ENCODE measurements at regions of chr3 and their contacts with region 1.

Region 1: GRCh38 chr3:72818092-72818773 is 30.0 kb downstream of the SHQ1 start:
- DNase-seq: no peak
- H3K4me3 Mint-ChIP-seq: no peak overlapping the region
- H3K27ac Mint-ChIP-seq: no peak overlapping the region
- H3K4me1 Mint-ChIP-seq: peaks cover 36% of the 10 kb centered on the region
- H3K27me3 Mint-ChIP-seq: no peaks in the 10 kb centered on the region

Region 2: GRCh38 chr3:71710906-71711494 is 1107.2 kb before region 1 on chr3:
- intact Hi-C with region 1: loop called (anchors 1 kb)
- DNase-seq: no peak
- H3K4me3 Mint-ChIP-seq: no peak overlapping the region
- H3K27ac Mint-ChIP-seq: no peak overlapping the region
- H3K4me1 Mint-ChIP-seq: peaks cover 56% of the 10 kb centered on the region
- H3K27me3 Mint-ChIP-seq: no peaks in the 10 kb centered on the region

Region 3: GRCh38 chr3:71955240-71956068 is 862.8 kb before region 1 on chr3:
- intact Hi-C with region 1: loop called (anchors 10 kb)
- DNase-seq: no peak
- H3K4me3 Mint-ChIP-seq: no peak overlapping the region
- H3K27ac Mint-ChIP-seq: no peak overlapping the region
- H3K4me1 Mint-ChIP-seq: peaks cover 33% of the 10 kb centered on the region
- H3K27me3 Mint-ChIP-seq: no peaks in the 10 kb centered on the region

Region 4: DNA sequence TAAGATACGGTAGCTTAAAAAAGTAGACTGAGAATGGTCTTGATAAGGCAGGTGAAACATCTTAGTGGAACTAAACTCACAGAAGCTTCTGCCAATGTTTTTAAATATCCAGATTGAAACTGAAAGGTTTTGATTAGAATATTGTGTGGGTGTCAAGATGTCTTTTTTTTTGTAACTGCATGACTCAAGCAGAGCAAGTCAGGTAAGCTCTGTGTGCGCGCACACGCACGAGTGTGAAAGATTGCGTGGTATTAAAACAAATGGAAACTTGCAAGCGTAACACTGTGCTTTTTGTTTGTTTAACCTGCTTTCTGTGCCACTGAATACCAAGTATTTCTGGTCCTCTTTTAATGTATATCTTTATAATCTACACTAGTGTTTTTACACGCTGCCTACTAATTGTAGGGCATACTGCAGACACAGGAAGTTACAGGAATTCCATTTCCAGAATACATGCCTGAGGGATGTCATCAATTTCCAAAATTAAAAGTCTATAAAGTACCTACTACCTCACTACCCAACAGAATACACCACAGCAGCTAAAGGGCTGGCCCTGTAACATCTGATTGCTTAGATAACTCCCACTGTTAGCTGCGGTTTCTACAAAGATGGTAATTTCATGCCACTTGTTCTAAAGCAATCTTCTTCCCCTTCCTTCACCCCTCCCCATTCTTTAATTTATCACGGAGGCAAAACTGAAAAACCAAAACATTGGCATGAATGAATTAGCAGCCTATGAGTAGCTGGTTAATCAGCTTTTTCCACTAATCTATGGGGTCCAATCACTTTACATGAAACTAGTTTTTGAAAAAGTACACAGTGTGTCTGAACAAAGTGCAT is 442.8 kb before region 1 on chr3:
- intact Hi-C with region 1: loop called (anchors 2 kb)
- DNase-seq: no peak
- H3K4me3 Mint-ChIP-seq: peak overlapping the region; percentile 32
- H3K27ac Mint-ChIP-seq: peak overlapping the region; percentile 92
- H3K4me1 Mint-ChIP-seq: peaks cover 48% of the 10 kb centered on the region
- H3K27me3 Mint-ChIP-seq: no peaks in the 10 kb centered on the region

Region 5: GRCh38 chr3:72482589-72483321 is 335.5 kb before region 1 on chr3:
- intact Hi-C with region 1: loop called (anchors 2 kb)
- DNase-seq: peak; percentile 47
- H3K4me3 Mint-ChIP-seq: peak overlapping the region; percentile 68
- H3K27ac Mint-ChIP-seq: peak overlapping the region; percentile 94
- H3K4me1 Mint-ChIP-seq: peaks cover 73% of the 10 kb centered on the region
- H3K27me3 Mint-ChIP-seq: no peaks in the 10 kb centered on the region

Region 6: GRCh38 chr3:72722930-72723726 is 95.1 kb before region 1 on chr3:
- intact Hi-C with region 1: loop called (anchors 1 kb)
- DNase-seq: no peak
- H3K4me3 Mint-ChIP-seq: no peak overlapping the region
- H3K27ac Mint-ChIP-seq: no peak overlapping the region
- H3K4me1 Mint-ChIP-seq: peaks cover 19% of the 10 kb centered on the region
- H3K27me3 Mint-ChIP-seq: no peaks in the 10 kb centered on the region

Region 7: DNA sequence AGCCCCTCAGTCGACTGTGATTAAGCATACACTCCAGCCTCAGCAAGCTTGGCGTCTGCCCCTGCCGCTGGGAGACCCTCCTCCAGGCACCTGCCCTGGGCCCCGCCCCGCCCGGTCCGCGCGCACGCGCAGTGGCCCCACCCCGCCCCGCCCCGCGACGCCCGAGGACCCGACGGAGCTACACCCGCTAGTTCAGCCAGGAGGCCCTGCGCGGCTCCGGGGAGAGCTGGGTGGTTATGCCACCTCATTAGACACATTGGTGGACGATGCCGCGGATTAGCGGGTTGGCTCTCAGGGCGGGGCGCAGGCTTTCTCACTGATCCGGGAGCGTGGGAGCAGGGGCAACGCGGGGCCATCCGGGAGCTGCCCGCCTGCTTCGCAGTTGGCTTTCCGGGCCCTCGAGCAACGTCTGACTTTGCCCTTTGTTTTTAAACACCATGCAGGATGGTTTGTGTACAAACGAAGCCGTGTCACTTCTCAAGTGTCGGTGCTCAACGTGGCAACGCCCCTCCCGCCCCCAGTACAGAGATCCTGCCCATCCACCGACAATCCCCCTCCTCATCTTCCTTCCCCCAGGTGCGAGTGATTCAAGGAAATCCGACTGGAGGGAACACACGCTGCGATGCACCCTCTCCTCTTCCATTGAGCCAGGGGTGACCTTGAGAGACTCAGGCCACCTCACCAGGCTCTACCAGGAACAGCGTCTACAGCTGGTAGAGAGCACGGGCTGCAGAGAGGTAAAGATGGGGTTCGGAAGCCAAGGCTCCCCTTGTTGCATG is 79.3 kb before region 1 on chr3:
- intact Hi-C with region 1: no loop called
- DNase-seq: peak; percentile 61
- H3K4me3 Mint-ChIP-seq: peak overlapping the region; percentile 81
- H3K27ac Mint-ChIP-seq: peak overlapping the region; percentile 64
- H3K4me1 Mint-ChIP-seq: peaks cover 19% of the 10 kb centered on the region
- H3K27me3 Mint-ChIP-seq: no peaks in the 10 kb centered on the region